ENCODE measurements at regions of chr6 and their contacts with region 1.

Region 1: DNA sequence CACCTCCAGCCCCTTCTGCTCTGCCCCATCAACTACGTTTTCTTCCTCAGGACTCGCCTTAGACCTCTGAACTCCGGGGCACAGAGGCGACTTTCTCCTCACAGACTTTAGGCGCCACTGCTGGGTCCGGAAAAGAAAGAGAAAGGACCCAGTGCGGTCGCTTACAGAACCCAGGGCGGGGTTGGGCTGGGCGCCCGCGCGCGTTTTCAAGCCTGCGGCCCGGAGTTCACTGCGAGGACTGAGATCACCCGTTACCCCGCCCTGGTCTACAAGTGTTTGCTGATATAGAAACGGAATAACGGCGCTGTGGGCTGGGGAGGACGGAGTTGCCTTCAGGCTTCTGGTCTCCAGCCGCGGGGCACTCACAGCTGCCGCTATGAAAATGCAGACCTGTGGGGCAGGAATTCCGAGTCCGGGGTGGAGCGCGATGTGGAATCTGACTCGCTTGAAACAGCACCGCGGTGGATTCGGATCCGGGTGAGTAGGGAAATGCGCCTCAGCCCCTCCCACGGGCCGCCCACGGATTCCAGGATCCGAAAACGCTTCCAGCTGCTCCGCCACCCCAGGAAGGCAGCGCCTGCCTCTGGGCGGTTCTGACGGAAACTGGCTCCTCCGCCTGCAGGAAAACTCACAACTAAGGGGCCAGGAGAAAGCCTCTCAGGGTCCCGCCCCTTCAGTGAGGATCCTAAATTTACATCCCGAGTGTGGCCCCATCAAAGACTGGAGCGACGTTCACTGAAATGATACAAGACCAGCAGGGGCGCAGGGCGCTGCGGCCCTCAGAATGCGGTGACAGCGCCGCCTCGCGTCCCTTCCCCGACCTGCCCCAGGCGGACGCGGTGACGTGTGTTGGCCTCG is 29.4 kb downstream of the HLA-F start:
- DNase-seq: peak; percentile 69 to 93 (median 85)
- ATAC-seq: peak; percentile 67
- H3K4me3 ChIP-seq: peak overlapping the region; percentile 74 to 96
- H3K4me3 Mint-ChIP-seq: peak overlapping the region; percentile 96
- H3K27ac ChIP-seq: peak overlapping the region; percentile 67 to 75
- H3K27ac Mint-ChIP-seq: peak overlapping the region; percentile 92
- H3K4me1 ChIP-seq: peaks cover 21% of the 10 kb centered on the region
- H3K4me1 Mint-ChIP-seq: peaks cover 40% of the 10 kb centered on the region
- H3K27me3 ChIP-seq: no peaks in the 10 kb centered on the region
- H3K27me3 Mint-ChIP-seq: no peaks in the 10 kb centered on the region
- CTCF ChIP-seq: peak; percentile 98

Region 2: GRCh38 chr6:29649701-29650673 is 102.7 kb before region 1 on chr6:
- CTCF ChIA-PET with region 1: interaction called, 11 read pairs
- POLR2A ChIA-PET with region 1: no interaction called
- intact Hi-C with region 1: loop called (anchors 2 kb)
- DNase-seq: peak; percentile 93 to 99 (median 99)
- ATAC-seq: peak; percentile 94
- H3K4me3 ChIP-seq: peak overlapping the region; percentile 67 to 68
- H3K4me3 Mint-ChIP-seq: peak overlapping the region; percentile 97
- H3K27ac ChIP-seq: peak overlapping the region; percentile 93 to 95
- H3K27ac Mint-ChIP-seq: peak overlapping the region; percentile 100
- H3K4me1 ChIP-seq: peaks cover 12% of the 10 kb centered on the region
- H3K4me1 Mint-ChIP-seq: peaks cover 13% of the 10 kb centered on the region
- H3K27me3 ChIP-seq: no peaks in the 10 kb centered on the region
- H3K27me3 Mint-ChIP-seq: peaks cover under 1% of the 10 kb centered on the region
- CTCF ChIP-seq: peak; percentile 98

Region 3: GRCh38 chr6:29730575-29731126 is 22.0 kb before region 1 on chr6:
- CTCF ChIA-PET with region 1: interaction called, 184 read pairs
- POLR2A ChIA-PET with region 1: interaction called, 12 read pairs
- intact Hi-C with region 1: no loop called
- DNase-seq: peak in 2 of 9 experiments; percentile 10 to 44
- ATAC-seq: no peak
- H3K4me3 ChIP-seq: no peak overlapping the region
- H3K4me3 Mint-ChIP-seq: no peak overlapping the region
- H3K27ac ChIP-seq: peak overlapping the region in 1 of 2 experiments; percentile 14
- H3K27ac Mint-ChIP-seq: peak overlapping the region; percentile 89
- H3K4me1 ChIP-seq: peaks cover 46% of the 10 kb centered on the region
- H3K4me1 Mint-ChIP-seq: peaks cover 76% of the 10 kb centered on the region
- H3K27me3 ChIP-seq: no peaks in the 10 kb centered on the region
- H3K27me3 Mint-ChIP-seq: no peaks in the 10 kb centered on the region
- CTCF ChIP-seq: no peak

Region 4: DNA sequence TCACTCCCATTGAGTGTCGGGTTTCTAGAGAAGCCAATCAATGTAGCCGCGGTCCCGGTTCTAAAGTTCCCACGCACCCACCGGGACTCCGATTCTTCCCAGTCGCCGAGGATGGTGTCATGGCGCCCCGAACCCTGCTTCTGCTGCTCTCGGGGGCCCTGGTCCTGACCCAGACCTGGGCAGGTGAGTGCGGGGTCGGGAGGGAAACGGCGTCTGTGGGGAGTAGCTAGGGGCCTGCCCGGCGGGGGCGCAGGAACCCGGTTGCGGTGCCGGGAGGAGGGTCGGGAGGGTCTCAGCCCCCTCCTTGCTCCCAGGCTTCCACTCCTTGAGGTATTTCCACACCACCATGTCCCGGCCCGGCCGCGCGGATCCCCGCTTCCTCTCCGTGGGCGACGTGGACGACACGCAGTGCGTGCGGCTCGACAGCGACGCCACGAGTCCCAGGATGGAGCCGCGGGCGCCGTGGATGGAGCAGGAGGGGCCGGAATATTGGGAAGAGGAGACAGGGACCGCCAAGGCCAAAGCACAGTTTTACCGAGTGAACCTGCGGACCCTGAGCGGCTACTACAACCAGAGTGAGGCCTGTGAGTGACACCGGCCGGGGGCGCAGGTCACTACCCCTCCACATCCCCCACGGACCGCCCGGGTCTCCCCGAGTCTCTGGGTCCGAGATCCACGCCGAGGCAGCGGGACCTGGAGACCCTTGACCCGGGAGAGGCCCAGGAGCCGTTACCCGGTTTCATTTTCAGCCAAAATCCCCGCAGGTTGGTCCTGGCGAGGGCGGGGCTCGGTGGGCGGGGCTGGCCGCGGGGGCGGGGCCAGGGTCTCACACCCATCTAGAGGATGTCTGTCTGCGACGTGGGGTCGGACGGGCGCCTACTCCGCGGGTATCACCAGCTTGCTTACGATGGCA is 39.7 kb after region 1 on chr6:
- CTCF ChIA-PET with region 1: interaction called, 3 read pairs
- POLR2A ChIA-PET with region 1: interaction called, 3 read pairs
- intact Hi-C with region 1: loop called in 1 of 2 experiments (anchors 2 kb)
- DNase-seq: peak; percentile 65 to 88 (median 77)
- ATAC-seq: peak; percentile 91
- H3K4me3 ChIP-seq: peak overlapping the region; percentile 65 to 95
- H3K4me3 Mint-ChIP-seq: peak overlapping the region; percentile 90
- H3K27ac ChIP-seq: peak overlapping the region; percentile 58 to 84
- H3K27ac Mint-ChIP-seq: peak overlapping the region; percentile 83
- H3K4me1 ChIP-seq: peaks cover 13% of the 10 kb centered on the region
- H3K4me1 Mint-ChIP-seq: peaks cover 15% of the 10 kb centered on the region
- H3K27me3 ChIP-seq: peaks cover 0 to 8% of the 10 kb centered on the region in 2 experiments
- H3K27me3 Mint-ChIP-seq: peaks cover 32% of the 10 kb centered on the region
- CTCF ChIP-seq: no peak

Region 5: GRCh38 chr6:30013291-30013922 is 260.7 kb after region 1 on chr6:
- CTCF ChIA-PET with region 1: no interaction called
- POLR2A ChIA-PET with region 1: no interaction called
- intact Hi-C with region 1: loop called in 1 of 2 experiments (anchors 10 kb)
- DNase-seq: peak in 7 of 9 experiments; percentile 17 to 58 (median 52)
- ATAC-seq: no peak
- H3K4me3 ChIP-seq: no peak overlapping the region
- H3K4me3 Mint-ChIP-seq: no peak overlapping the region
- H3K27ac ChIP-seq: no peak overlapping the region
- H3K27ac Mint-ChIP-seq: no peak overlapping the region
- H3K4me1 ChIP-seq: no peaks in the 10 kb centered on the region
- H3K4me1 Mint-ChIP-seq: no peaks in the 10 kb centered on the region
- H3K27me3 ChIP-seq: peaks cover 0 to 2% of the 10 kb centered on the region in 2 experiments
- H3K27me3 Mint-ChIP-seq: no peaks in the 10 kb centered on the region
- CTCF ChIP-seq: no peak